ENCODE measurements at regions of chr4 and their contacts with region 1.

Region 1: GRCh38 chr4:78592104-78592783 is 40.7 kb downstream of the ANXA3 start:
- DNase-seq: no peak
- ATAC-seq: no peak

Region 2: GRCh38 chr4:78551479-78552351 is 40.5 kb before region 1 on chr4 and contains the start of gene ANXA3:
- intact Hi-C with region 1: loop called (anchors 5 kb)
- DNase-seq: peak; percentile 77
- ATAC-seq: peak; percentile 80
- total RNA-seq, gene ANXA3: 54.5 TPM